ENCODE measurements at regions of chr11 and their contacts with region 1.

Region 1: DNA sequence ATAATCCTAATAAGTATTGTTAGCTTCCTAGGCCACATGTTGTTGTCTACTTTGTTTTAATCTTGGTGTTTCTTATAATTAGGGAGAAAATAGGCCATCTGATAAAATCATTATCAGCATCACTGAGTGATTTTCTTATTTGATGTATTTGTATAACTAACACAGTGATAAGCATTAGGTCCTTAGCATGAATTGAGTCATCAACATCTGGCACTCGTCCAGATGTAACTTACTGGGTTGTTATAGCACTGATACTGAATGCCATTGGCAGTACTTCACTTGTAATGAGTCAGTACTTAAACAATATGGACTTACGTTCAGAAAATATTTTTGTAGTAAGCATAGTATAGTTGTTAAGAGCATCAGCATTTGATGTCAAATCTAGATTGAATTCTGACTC is 16.2 kb downstream of the API5 start:
- DNase-seq: no peak
- ATAC-seq: no peak
- H3K4me3 ChIP-seq: no peak overlapping the region
- H3K4me3 Mint-ChIP-seq: no peak overlapping the region
- H3K27ac ChIP-seq: no peak overlapping the region
- H3K27ac Mint-ChIP-seq: no peak overlapping the region
- H3K4me1 ChIP-seq: no peaks in the 10 kb centered on the region
- H3K4me1 Mint-ChIP-seq: no peaks in the 10 kb centered on the region
- H3K27me3 ChIP-seq: no peaks in the 10 kb centered on the region
- H3K27me3 Mint-ChIP-seq: no peaks in the 10 kb centered on the region
- CTCF ChIP-seq: no peak

Region 2: GRCh38 chr11:42709216-42709615 is 618.8 kb before region 1 on chr11:
- CTCF ChIA-PET with region 1: no interaction called
- POLR2A ChIA-PET with region 1: no interaction called
- intact Hi-C with region 1: no loop called
- DNase-seq: no peak
- ATAC-seq: no peak
- H3K4me3 ChIP-seq: no peak overlapping the region
- H3K4me3 Mint-ChIP-seq: no peak overlapping the region
- H3K27ac ChIP-seq: no peak overlapping the region
- H3K27ac Mint-ChIP-seq: no peak overlapping the region
- H3K4me1 ChIP-seq: no peaks in the 10 kb centered on the region
- H3K4me1 Mint-ChIP-seq: no peaks in the 10 kb centered on the region
- H3K27me3 ChIP-seq: no peaks in the 10 kb centered on the region
- H3K27me3 Mint-ChIP-seq: no peaks in the 10 kb centered on the region
- CTCF ChIP-seq: no peak

Region 3: GRCh38 chr11:43396617-43397016 is 68.6 kb after region 1 on chr11:
- CTCF ChIA-PET with region 1: no interaction called
- POLR2A ChIA-PET with region 1: no interaction called
- intact Hi-C with region 1: loop called in 1 of 2 experiments (anchors 2 kb)
- DNase-seq: no peak
- ATAC-seq: no peak
- H3K4me3 ChIP-seq: no peak overlapping the region
- H3K4me3 Mint-ChIP-seq: no peak overlapping the region
- H3K27ac ChIP-seq: no peak overlapping the region
- H3K27ac Mint-ChIP-seq: no peak overlapping the region
- H3K4me1 ChIP-seq: no peaks in the 10 kb centered on the region
- H3K4me1 Mint-ChIP-seq: peaks cover 16% of the 10 kb centered on the region
- H3K27me3 ChIP-seq: no peaks in the 10 kb centered on the region
- H3K27me3 Mint-ChIP-seq: no peaks in the 10 kb centered on the region
- CTCF ChIP-seq: no peak